K562 (cell line): ENCODE measurements at regions of chr1 and their contacts with region 1.

Region 1: DNA sequence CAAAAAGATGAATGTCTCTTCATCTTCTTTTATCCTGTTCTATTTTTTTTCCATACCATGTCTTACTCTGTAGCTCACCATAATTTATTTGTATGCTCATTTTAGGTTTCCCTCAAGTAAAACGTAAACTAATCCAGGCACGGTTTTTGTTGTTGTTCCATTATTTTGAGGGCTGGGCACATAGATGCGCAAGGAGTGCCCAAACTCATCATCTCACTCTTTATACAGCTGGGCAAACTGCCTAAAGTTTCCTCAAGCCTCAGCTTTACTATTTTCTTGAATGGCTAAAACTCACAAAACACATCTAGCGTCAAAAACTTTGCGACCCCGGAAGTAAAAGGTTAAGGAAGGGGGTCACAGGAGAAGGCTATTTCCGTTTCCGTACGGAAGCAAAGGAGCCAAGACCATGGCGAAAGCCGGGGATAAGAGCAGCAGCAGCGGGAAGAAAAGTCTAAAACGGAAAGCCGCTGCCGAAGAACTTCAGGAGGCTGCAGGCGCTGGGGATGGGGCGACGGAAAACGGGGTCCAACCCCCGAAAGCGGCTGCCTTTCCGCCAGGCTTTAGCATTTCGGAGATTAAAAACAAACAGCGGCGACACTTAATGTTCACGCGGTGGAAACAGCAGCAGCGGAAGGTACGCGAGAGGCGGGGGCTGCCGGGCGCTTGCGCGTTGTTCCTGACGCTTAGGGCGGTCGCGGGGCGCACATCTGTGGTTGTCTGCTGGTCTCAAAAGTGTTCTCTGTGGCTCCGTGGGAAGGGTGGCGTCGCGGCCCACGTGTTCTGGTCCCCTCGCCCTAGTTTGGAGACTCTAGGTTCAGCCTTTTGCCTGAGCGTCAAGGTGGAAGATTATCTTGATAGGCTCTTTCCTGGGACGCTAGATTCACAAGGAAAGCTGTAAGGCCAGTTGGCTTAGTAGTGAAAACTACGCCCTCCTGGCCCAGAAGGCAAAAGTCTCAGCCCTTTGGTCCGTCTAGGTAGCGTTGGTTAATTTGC is at the start of gene RPF1:
- DNase-seq: peak; percentile 63 to 89 (median 74)
- ATAC-seq: peak; percentile 97
- H3K4me3 ChIP-seq: peak within 1 kb of the TSS; percentile 89
- H3K27ac ChIP-seq: peak within 1 kb of the TSS; percentile 88
- H3K4me1 ChIP-seq: peaks cover 0 to 5% of the 10 kb centered on the region in 2 experiments; a peak in 2 of 5 replicates
- H3K27me3 ChIP-seq: no peaks in the 10 kb centered on the region; a peak in 2 of 5 replicates
- CTCF ChIP-seq: no peak; a peak in 1 of 6 replicates
- EP300 ChIP-seq: no peak
- POLR2A ChIP-seq: peak; percentile 97
- RAD21 ChIP-seq: peak in 1 of 2 experiments; percentile 13; a peak in 1 of 4 replicates
- polyA plus RNA-seq, gene RPF1: 68.0 to 84.7 TPM

Region 2: DNA sequence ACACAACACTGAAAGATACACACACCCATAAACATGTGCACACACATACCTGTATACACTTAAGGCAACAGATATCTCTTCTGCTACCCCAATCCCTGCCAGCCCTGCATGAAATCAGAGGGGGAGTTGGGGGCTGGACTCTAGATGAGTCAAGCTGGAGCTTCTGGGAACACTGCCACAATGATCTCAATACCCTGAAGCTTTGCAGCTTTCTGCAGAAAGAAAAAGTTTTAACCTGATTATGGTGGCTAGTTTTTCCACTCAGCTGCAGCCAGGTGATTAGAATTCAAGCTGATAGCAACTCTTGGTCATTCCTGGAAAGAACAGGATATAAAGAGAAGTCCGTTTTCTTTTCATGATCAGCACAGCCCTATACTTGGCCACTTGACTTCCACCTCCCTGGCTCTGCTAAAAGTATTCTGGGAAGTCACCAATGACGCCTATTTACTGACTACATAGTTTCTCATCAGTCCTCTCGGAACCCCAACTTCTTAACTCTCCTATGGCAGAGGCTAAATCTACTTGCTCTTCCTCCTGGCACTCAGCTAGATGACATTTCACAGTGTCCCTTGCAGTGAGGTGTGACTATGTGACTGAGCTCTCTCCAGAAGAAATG is 101.6 kb before region 1 on chr1:
- CTCF ChIA-PET with region 1: no interaction called
- POLR2A ChIA-PET with region 1: no interaction called
- in situ Hi-C with region 1: no loop called
- intact Hi-C with region 1: no loop called
- DNase-seq: peak in 1 of 4 experiments; percentile 35
- ATAC-seq: no peak
- H3K4me3 ChIP-seq: no peak overlapping the region
- H3K27ac ChIP-seq: no peak overlapping the region
- H3K4me1 ChIP-seq: peaks cover 0 to 7% of the 10 kb centered on the region in 2 experiments; a peak in 2 of 5 replicates
- H3K27me3 ChIP-seq: no peaks in the 10 kb centered on the region
- CTCF ChIP-seq: no peak
- EP300 ChIP-seq: no peak
- POLR2A ChIP-seq: no peak
- RAD21 ChIP-seq: no peak

Region 3: DNA sequence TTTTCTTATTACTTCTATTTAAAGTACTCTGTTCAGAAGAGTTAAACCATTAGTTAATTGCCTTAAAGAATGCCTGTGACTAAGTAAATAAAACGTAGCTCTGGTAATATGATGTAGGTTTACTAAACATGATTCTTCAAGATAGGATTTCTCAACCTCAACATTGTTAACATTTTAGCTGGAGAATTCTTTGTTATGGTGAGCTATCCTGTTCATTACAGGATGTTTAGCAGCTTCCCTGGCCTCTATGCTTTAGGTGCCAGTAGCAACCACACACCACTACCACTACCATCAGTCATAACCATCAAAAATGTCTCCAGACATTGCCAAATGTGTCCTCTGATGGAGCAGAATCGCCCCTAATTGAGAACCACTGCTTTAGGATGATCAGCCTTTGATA is 10.6 kb after region 1 on chr1:
- CTCF ChIA-PET with region 1: no interaction called
- POLR2A ChIA-PET with region 1: interaction called, 14 read pairs
- in situ Hi-C with region 1: no loop called
- intact Hi-C with region 1: no loop called
- DNase-seq: no peak
- ATAC-seq: no peak
- H3K4me3 ChIP-seq: no peak overlapping the region
- H3K27ac ChIP-seq: no peak overlapping the region
- H3K4me1 ChIP-seq: no peaks in the 10 kb centered on the region
- H3K27me3 ChIP-seq: no peaks in the 10 kb centered on the region
- CTCF ChIP-seq: no peak
- EP300 ChIP-seq: no peak
- POLR2A ChIP-seq: no peak
- RAD21 ChIP-seq: no peak